ENCODE measurements at regions of chr9 and their contacts with region 1.

Region 1: GRCh38 chr9:129320575-129321263 is 142.7 kb upstream of the IER5L start:
- DNase-seq: peak; percentile 16 to 85 (median 42)
- ATAC-seq: peak; percentile 97
- H3K4me3 ChIP-seq: peak overlapping the region; percentile 46
- H3K4me3 Mint-ChIP-seq: peak overlapping the region; percentile 74
- H3K27ac ChIP-seq: peak overlapping the region in 1 of 2 donors; percentile 50
- H3K27ac Mint-ChIP-seq: peak overlapping the region; percentile 67
- H3K4me1 ChIP-seq: peaks cover 24% of the 10 kb centered on the region
- H3K4me1 Mint-ChIP-seq: peaks cover 17% of the 10 kb centered on the region
- H3K27me3 ChIP-seq: no peaks in the 10 kb centered on the region
- H3K27me3 Mint-ChIP-seq: no peaks in the 10 kb centered on the region
- CTCF ChIP-seq: peak; percentile 25

Region 2: GRCh38 chr9:129333953-129334724 is 13.4 kb after region 1 on chr9:
- CTCF ChIA-PET with region 1: interaction called, 3 read pairs
- POLR2A ChIA-PET with region 1: interaction called, 14 read pairs
- intact Hi-C with region 1: no loop called
- DNase-seq: peak in 10 of 14 experiments; percentile 14 to 66 (median 36)
- ATAC-seq: peak; percentile 63
- H3K4me3 ChIP-seq: peak overlapping the region; percentile 29
- H3K4me3 Mint-ChIP-seq: peak overlapping the region; percentile 40
- H3K27ac ChIP-seq: no peak overlapping the region
- H3K27ac Mint-ChIP-seq: peak overlapping the region; percentile 75
- H3K4me1 ChIP-seq: peaks cover 37% of the 10 kb centered on the region
- H3K4me1 Mint-ChIP-seq: peaks cover 27% of the 10 kb centered on the region
- H3K27me3 ChIP-seq: no peaks in the 10 kb centered on the region
- H3K27me3 Mint-ChIP-seq: no peaks in the 10 kb centered on the region
- CTCF ChIP-seq: no peak

Region 3: DNA sequence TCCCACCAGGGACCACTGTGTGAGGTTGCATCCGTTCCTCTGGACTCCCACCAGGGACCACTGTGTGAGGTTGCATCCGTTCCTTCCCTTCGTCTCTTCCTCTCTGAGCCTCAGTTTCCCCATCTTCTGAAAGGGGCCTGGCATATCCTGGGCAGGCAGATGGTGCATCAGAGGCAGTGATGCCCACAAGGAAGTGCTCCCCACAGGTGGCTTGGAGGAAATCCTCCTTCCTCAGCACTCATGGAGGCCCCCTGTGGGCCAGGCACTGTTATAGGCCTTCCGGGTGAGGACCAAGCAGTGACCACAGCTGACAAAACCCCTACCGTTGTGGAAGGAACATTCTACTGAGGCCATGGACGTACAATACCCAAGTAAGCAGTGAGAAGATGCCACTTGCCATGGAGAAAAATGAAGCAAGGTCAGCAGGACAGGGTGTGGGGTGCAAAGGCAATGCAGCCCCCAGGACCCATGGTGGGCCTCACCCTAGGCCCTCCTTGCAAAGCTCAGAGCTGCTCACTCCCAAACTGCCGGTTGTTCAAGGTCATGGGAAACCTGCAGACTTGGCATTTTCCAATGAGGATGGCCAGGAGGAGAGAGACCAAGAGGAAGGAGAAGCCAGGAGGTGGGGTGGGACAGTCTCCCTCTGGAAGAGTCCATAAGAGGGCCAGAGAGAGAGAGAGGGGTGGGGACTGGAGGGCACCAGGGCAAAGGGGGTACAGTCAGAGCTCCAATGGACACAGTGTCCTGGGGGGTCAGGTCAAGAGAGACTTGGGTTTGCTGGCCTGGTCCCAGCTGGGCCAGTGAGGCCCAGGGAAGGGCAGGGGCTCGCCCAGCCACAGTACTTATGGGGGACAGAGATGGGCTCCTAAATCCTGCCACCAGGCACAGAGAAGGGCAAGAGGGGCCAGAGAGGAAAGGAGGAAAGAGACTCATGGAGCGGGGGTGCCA is 249.1 kb after region 1 on chr9:
- CTCF ChIA-PET with region 1: no interaction called
- POLR2A ChIA-PET with region 1: no interaction called
- intact Hi-C with region 1: loop called in 1 of 2 experiments (anchors 5 kb)
- DNase-seq: peak in 3 of 14 experiments; percentile 28 to 39 (median 35)
- ATAC-seq: no peak
- H3K4me3 ChIP-seq: peak overlapping the region; percentile 24
- H3K4me3 Mint-ChIP-seq: peak overlapping the region; percentile 77
- H3K27ac ChIP-seq: no peak overlapping the region
- H3K27ac Mint-ChIP-seq: no peak overlapping the region
- H3K4me1 ChIP-seq: peaks cover 22% of the 10 kb centered on the region
- H3K4me1 Mint-ChIP-seq: peaks cover 13% of the 10 kb centered on the region
- H3K27me3 ChIP-seq: peaks cover 22 to 24% of the 10 kb centered on the region in 2 experiments
- H3K27me3 Mint-ChIP-seq: peaks cover 30% of the 10 kb centered on the region
- CTCF ChIP-seq: no peak

Measured in CD4-positive, alpha-beta T cell (primary cell).